ENCODE measurements at regions of chr13 and their contacts with region 1.

Region 1: GRCh38 chr13:74090869-74091605 is 43.2 kb downstream of the KLF12 start:
- DNase-seq: no peak
- ATAC-seq: no peak
- H3K4me3 ChIP-seq: no peak overlapping the region
- H3K27ac ChIP-seq: no peak overlapping the region
- H3K4me1 ChIP-seq: no peaks in the 10 kb centered on the region
- H3K27me3 ChIP-seq: no peaks in the 10 kb centered on the region
- CTCF ChIP-seq: no peak

Region 2: DNA sequence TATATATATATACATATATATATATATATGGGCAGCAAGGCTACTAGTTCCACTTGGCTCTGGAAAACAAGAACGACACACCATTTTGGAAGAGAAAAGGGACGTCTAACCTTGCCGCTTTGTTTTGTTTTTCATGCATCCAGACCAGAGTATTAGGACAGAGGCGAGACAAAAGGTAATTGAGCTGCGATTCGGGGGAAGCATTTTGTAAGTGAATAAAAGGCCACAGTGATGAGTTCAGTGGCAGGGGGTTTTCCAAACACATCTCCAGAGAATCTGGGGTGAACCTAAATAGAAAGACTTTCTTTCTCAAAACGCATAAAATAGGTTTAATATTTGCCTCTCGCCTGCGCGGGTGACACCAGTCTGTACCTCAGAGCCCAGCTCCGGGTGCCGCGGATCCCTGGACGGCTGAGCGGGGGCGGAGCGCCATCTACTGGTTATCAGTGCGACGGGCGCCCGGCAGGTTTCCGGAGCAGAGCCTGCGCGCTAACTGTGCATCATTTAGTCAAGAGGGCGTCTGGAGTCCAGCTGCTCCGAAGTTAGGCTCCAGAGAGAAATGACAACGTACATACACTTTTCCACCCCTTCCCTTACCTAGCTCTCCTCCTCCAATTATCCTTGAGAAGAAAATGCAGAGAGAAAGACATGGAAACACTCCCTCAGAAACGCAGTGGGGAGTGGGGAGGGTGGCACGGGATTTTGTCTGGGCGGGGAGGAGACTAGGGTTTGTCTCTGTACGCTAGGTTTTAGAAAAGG is 1128.6 kb after region 1 on chr13:
- CTCF ChIA-PET with region 1: no interaction called
- POLR2A ChIA-PET with region 1: interaction called, 14 read pairs
- in situ Hi-C with region 1: no loop called
- intact Hi-C with region 1: no loop called
- DNase-seq: no peak
- ATAC-seq: peak; percentile 97
- H3K4me3 ChIP-seq: peak overlapping the region in 1 of 2 experiments; percentile 30; a peak in 1 of 4 replicates
- H3K27ac ChIP-seq: no peak overlapping the region
- H3K4me1 ChIP-seq: no peaks in the 10 kb centered on the region
- H3K27me3 ChIP-seq: no peaks in the 10 kb centered on the region
- CTCF ChIP-seq: peak; percentile 92